Posterior vena cava (tissue), 2 donors: ENCODE measurements at regions of chr2 and their contacts with region 1.

Region 1: DNA sequence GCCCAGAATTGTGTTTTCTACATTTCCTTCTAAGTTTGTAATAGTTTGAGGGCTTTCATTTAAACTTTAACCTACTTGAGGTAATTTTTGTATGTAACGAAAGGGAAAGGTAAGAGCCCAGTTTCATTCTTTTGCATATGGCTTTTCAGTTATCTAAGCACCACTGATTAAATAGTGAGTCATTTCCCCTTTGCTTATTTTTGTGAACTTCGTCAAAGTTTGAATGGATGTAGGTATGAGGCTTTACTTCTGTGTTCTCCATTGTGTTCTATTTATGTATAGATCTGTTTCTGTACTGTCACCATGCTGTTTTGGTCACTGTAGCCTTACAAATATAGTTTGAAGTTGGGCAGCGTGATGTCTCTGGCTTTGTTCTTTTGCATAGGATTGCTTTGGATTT is 944.8 kb upstream of the CNTNAP5 start:
- DNase-seq: no peak

Region 2: DNA sequence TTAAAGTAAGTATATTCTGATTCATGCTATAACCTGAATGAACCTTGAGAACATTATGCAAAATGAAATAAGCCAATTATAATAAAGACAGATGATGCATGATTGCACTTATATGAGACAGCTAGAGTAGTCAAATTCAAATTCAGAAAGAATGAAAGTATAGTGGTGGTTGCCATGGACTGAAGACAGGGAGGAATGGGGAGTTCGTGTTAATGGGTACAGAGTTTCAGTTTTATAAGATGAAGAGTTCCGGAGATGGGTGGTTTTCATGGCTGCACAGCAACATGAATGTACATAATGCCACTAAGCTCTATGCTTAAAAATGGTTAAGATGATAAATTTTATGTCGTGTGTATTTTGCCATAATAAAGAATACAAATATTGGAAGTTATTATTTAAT is 573.7 kb before region 1 on chr2:
- intact Hi-C with region 1: loop called in 1 of 2 experiments (anchors 5 kb)
- DNase-seq: no peak